ENCODE measurements at regions of chr17 and their contacts with region 1.

Region 1: GRCh38 chr17:50478391-50479381 is at the start of gene RSAD1:
- DNase-seq: peak; percentile 79
- H3K4me3 Mint-ChIP-seq: peak within 1 kb of the TSS; percentile 91
- H3K27ac Mint-ChIP-seq: peak within 1 kb of the TSS; percentile 81
- H3K4me1 Mint-ChIP-seq: peaks cover 27% of the 10 kb centered on the region
- H3K27me3 Mint-ChIP-seq: peaks cover 6% of the 10 kb centered on the region
- total RNA-seq, gene RSAD1: 53.4 and 54.2 TPM in 2 replicates

Region 2: GRCh38 chr17:50361561-50362480 is 116.9 kb before region 1 on chr17:
- intact Hi-C with region 1: loop called (anchors 2 kb)
- DNase-seq: peak; percentile 34
- H3K4me3 Mint-ChIP-seq: peak overlapping the region; percentile 3
- H3K27ac Mint-ChIP-seq: peak overlapping the region; percentile 86
- H3K4me1 Mint-ChIP-seq: peaks cover 9% of the 10 kb centered on the region
- H3K27me3 Mint-ChIP-seq: no peaks in the 10 kb centered on the region

Region 3: DNA sequence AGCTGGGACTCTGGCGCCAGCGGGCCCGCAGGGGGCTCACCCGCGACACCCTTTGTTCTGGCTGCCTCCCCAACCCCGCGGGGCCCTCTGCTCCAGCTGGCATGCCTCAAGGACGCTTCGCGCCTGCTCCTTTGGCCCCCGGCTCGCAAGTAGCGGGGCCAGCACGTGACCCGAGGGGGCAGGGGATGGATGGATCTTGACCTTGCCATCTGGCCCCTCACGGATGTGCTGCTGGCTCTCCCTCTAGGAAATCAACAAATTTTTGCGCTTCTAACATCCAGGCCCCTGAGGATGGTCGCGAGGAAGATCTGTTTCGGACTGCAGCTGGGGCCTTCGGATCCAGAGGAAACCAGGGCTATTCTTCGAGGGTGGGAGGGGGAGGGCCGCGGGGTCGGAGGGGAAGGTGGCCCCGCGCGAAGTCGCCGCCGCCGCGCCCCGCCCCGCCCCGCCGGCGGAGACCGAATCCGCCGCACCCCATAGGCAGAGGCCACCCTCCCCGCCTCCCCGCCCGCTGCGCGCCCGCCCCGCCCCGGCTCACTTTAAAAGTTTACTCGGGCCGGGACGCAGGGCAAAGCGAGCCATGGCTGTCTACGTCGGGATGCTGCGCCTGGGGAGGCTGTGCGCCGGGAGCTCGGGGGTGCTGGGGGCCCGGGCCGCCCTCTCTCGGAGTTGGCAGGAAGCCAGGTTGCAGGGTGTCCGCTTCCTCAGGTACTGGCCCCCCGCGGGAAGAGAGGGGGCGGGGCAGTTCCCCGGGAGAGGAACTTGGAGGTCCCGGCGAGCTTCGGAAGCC is 52.8 kb before region 1 on chr17 and contains the start of gene ACSF2:
- intact Hi-C with region 1: loop called (anchors 1 kb)
- DNase-seq: peak; percentile 66
- H3K4me3 Mint-ChIP-seq: peak within 1 kb of the TSS; percentile 91
- H3K27ac Mint-ChIP-seq: peak within 1 kb of the TSS; percentile 72
- H3K4me1 Mint-ChIP-seq: peaks cover 35% of the 10 kb centered on the region
- H3K27me3 Mint-ChIP-seq: no peaks in the 10 kb centered on the region
- total RNA-seq, gene ACSF2: 8.8 and 11.3 TPM in 2 replicates

Region 4: DNA sequence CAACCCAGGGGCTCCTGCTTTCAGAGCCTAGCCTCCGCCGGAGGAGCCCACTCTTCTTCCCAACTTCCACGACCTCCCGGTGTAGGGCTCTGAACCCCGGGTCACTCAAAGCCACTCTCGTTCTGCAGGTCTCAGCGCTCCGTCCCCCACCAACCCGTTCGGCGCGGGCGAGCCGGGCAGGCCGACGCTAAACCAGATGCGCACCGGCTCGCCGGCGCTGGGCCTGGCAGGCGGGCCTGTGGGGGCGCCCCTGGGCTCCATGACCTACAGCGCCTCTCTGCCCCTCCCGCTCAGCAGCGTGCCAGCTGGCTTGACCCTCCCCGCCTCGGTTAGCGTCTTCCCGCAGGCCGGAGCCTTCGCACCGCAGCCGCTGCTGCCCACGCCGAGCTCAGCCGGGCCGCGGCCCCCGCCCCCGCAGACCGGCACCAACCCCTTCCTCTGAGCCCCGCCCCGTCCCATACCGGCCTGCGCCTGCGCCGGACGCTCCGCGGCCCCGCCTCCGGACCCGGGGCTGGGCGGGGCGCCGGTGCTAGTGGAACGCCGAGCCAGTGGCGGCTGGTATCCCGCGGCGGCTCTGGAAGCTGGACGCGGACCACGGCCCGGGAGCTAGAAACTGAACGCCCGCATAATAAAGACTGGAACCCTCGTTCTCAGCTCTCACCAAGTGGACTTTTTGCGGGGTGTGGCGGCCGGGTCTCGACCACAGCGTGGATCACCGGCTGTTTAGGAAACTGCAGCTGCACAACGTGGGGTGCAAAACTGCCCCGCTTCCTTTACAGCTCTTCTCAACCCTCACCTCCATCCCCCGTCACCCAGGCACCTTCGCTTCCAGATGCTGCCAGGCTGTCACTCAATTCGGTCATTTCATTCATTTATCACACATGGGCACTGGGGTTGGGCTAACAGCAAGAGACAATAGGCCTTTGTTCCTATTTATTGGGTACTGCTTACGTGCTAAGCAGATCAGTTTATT is 63.3 kb after region 1 on chr17:
- intact Hi-C with region 1: loop called (anchors 1 kb)
- DNase-seq: peak; percentile 87
- H3K4me3 Mint-ChIP-seq: peak overlapping the region; percentile 64
- H3K27ac Mint-ChIP-seq: peak overlapping the region; percentile 55
- H3K4me1 Mint-ChIP-seq: peaks cover 23% of the 10 kb centered on the region
- H3K27me3 Mint-ChIP-seq: peaks cover 15% of the 10 kb centered on the region

Region 5: GRCh38 chr17:50626037-50626574 is 147.4 kb after region 1 on chr17:
- intact Hi-C with region 1: loop called (anchors 1 kb)
- DNase-seq: peak; percentile 38
- H3K4me3 Mint-ChIP-seq: no peak overlapping the region
- H3K27ac Mint-ChIP-seq: no peak overlapping the region
- H3K4me1 Mint-ChIP-seq: peaks cover 4% of the 10 kb centered on the region
- H3K27me3 Mint-ChIP-seq: peaks cover 40% of the 10 kb centered on the region

Region 6: GRCh38 chr17:50749245-50749644 is 270.6 kb after region 1 on chr17:
- intact Hi-C with region 1: no loop called
- DNase-seq: no peak
- H3K4me3 Mint-ChIP-seq: no peak overlapping the region
- H3K27ac Mint-ChIP-seq: no peak overlapping the region
- H3K4me1 Mint-ChIP-seq: peaks cover 6% of the 10 kb centered on the region
- H3K27me3 Mint-ChIP-seq: no peaks in the 10 kb centered on the region